ENCODE measurements at regions of chr14 and their contacts with region 1.

Region 1: DNA sequence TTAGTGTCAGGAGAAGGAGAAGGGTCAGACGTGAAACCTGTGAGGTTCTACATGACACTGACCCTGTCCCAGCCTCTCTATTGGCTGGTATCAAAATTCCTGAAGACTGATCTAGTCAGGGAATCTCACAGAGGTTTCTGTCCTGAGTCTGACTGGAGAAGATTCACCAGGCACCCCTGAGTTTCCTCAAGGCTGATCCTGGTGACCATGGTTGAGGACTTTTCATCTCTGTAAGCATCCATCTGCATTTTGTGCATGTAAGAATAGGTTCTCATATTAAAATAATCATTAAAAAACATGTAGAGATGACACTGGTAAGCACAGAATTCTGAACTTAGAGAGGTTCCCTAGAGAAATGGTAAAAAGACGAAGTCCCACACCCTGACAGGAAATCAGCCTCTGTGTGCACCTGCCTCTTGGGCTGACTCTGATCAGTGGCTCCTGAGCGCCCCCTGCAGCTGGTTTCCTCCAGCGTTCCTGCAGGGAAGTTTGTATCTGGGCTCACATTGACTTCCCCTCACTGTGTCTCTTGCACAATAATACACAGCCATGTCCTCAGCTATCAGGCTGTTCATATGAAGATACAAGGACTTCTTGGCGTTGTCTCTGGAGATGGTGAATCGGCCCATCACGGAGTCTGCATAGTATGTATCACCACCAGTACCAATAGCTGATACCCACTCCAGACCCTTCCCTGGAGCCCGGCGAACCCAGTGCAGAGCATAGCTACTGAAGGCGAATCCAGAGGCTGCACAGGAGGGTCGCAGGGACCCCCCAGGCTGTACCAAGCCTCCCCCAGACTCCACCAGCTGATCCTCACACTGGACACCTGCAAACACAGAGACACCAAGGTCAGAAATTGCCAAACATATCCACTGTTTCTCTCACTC is 991.9 kb downstream of the TMEM121 start:
- DNase-seq: peak; percentile 77 to 81 (median 79)
- H3K4me3 ChIP-seq: no peak overlapping the region
- H3K4me3 Mint-ChIP-seq: peak overlapping the region in 1 of 8 donors; percentile 13
- H3K27ac ChIP-seq: no peak overlapping the region
- H3K27ac Mint-ChIP-seq: peak overlapping the region in 1 of 7 donors; percentile 35
- H3K4me1 ChIP-seq: peaks cover 14% of the 10 kb centered on the region
- H3K4me1 Mint-ChIP-seq: peaks cover 10 to 27% (median 20%) of the 10 kb centered on the region in 4 donors
- H3K27me3 ChIP-seq: no peaks in the 10 kb centered on the region
- H3K27me3 Mint-ChIP-seq: peaks cover 9 to 17% of the 10 kb centered on the region in 2 donors

Region 2: DNA sequence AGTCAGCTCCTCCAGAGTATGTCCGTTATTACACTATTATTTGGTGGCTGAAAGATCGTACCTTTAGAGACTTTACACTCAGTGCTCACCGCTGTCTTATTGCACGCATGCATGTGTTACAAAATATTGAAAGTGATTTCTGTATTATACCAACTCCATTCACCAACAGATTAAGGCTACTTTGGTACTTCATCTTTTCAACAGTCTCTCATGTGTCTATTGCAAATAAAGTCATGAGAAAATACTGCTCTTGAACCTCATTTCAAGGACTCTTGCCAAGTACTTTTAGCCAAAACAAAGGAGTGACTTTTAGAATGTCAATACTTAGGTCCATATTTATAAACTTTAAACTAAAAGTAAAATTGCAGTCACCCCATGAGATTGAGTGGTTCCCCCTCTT is 488.3 kb before region 1 on chr14:
- CTCF ChIA-PET with region 1: no interaction called
- POLR2A ChIA-PET with region 1: no interaction called
- intact Hi-C with region 1: no loop called
- DNase-seq: no peak
- H3K4me3 ChIP-seq: no peak overlapping the region
- H3K4me3 Mint-ChIP-seq: no peak overlapping the region
- H3K27ac ChIP-seq: no peak overlapping the region
- H3K27ac Mint-ChIP-seq: no peak overlapping the region
- H3K4me1 ChIP-seq: peaks cover 8% of the 10 kb centered on the region
- H3K4me1 Mint-ChIP-seq: peaks cover 0 to 5% (median 3%) of the 10 kb centered on the region in 4 donors
- H3K27me3 ChIP-seq: no peaks in the 10 kb centered on the region
- H3K27me3 Mint-ChIP-seq: peaks cover 0 to 2% of the 10 kb centered on the region in 2 donors

Region 3: GRCh38 chr14:106459971-106460730 is 58.1 kb before region 1 on chr14:
- CTCF ChIA-PET with region 1: interaction called, 8 read pairs
- POLR2A ChIA-PET with region 1: interaction called, 5 read pairs
- intact Hi-C with region 1: loop called (anchors 1 kb)
- DNase-seq: peak; percentile 49 to 68 (median 66)
- H3K4me3 ChIP-seq: no peak overlapping the region
- H3K4me3 Mint-ChIP-seq: peak overlapping the region in 2 of 8 donors; percentile 32 to 35
- H3K27ac ChIP-seq: no peak overlapping the region
- H3K27ac Mint-ChIP-seq: peak overlapping the region in 2 of 7 donors; percentile 6 to 57
- H3K4me1 ChIP-seq: no peaks in the 10 kb centered on the region
- H3K4me1 Mint-ChIP-seq: peaks cover 2 to 8% (median 5%) of the 10 kb centered on the region in 4 donors
- H3K27me3 ChIP-seq: no peaks in the 10 kb centered on the region
- H3K27me3 Mint-ChIP-seq: peaks cover 10 to 14% of the 10 kb centered on the region in 2 donors

Region 4: DNA sequence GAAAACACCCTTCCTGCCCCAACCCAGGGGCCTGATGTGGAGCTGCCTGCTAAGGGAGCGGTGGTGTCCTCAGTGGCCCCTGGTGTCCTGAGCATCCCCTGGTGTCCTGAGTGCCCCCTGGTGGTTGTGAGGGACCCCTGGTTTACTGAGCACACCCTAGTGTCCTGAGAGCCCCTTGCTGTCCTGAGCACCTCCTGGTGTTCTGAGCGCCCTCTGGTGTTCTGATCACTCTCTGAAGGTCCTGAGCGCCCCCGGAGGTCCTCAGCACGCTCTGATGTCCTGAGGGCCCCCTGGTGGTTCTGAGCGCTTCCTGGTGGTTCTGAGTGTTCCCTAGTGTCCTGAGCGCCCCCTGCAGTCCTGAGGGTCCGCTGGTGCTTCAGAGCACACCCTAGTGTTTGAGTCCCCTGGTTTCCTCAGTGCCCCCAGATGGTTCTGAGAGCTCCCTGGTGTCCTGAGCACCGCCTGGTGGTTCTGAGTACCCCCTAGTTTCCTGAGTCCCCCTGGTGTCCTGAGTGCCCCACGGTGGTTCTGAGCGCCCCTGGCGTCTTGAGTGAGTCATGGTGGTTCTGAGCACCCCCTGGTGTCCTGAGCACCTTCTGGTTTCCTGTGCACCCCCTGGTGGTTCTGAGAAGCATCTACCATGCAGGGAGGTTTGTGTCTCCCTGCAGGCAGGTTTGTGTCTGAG is 12.3 kb after region 1 on chr14:
- CTCF ChIA-PET with region 1: interaction called, 11 read pairs
- POLR2A ChIA-PET with region 1: interaction called, 3 read pairs
- intact Hi-C with region 1: no loop called
- DNase-seq: peak; percentile 36 to 66 (median 44)
- H3K4me3 ChIP-seq: no peak overlapping the region
- H3K4me3 Mint-ChIP-seq: no peak overlapping the region
- H3K27ac ChIP-seq: no peak overlapping the region
- H3K27ac Mint-ChIP-seq: peak overlapping the region in 1 of 7 donors; percentile 27
- H3K4me1 ChIP-seq: no peaks in the 10 kb centered on the region
- H3K4me1 Mint-ChIP-seq: no peaks in the 10 kb centered on the region
- H3K27me3 ChIP-seq: no peaks in the 10 kb centered on the region
- H3K27me3 Mint-ChIP-seq: peaks cover 23 to 24% of the 10 kb centered on the region in 2 donors

Measured in CD4-positive, alpha-beta memory T cell (primary cell).